ENCODE measurements at regions of chr14 and their contacts with region 1.

Region 1: DNA sequence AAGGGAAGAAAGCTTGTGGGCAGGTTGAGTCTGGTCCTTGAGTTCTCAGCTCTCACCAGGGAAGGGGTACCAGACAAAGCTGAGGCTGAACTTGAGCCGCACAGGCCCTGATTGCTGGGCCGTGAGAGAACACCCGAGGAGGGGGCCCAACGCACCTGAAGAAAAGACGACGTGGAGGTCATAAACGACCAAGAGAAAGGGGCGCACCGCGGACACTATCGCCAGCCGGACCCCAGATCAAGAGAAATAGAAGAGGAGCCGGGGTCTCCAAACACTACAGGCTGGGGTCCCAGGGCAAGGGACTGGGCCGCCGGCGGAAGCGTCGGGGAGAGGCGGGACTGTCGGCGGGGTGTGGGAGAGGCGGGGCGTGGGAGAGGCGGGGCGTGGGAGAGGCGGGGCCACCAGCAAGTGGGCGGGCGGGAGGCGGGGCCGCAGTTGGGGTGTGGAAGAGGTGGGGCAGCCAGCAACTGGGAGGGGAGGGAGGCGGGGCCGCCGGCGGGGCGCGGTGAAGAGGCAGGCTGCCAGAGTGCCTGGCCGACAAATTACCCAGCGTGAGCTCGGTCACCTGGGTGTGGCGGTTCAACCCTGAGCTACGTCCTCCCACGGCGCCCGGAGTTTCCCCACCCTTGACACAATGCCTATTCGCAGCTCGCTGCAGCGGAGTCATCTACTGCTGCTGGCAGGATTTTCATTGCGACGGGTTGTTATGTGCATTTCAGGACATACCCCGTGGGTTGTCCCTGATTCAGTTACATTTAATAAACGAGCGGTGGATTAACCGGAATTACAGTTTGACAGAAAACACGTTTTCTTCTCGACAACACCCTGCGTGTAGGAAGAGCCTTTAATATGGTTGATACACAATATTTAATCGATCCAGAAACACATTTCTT is 15.5 kb upstream of the NEMF start:
- DNase-seq: peak; percentile 88 to 94
- H3K4me3 ChIP-seq: peak overlapping the region; percentile 85
- H3K27ac ChIP-seq: peak overlapping the region; percentile 78
- H3K4me1 ChIP-seq: peaks cover 32% of the 10 kb centered on the region
- H3K27me3 ChIP-seq: no peaks in the 10 kb centered on the region
- CTCF ChIP-seq: no peak

Region 2: GRCh38 chr14:49483268-49483667 is 384.8 kb before region 1 on chr14:
- CTCF ChIA-PET with region 1: no interaction called
- POLR2A ChIA-PET with region 1: no interaction called
- intact Hi-C with region 1: no loop called
- DNase-seq: no peak
- H3K4me3 ChIP-seq: no peak overlapping the region
- H3K27ac ChIP-seq: no peak overlapping the region
- H3K4me1 ChIP-seq: no peaks in the 10 kb centered on the region
- H3K27me3 ChIP-seq: no peaks in the 10 kb centered on the region
- CTCF ChIP-seq: no peak

Region 3: GRCh38 chr14:49828640-49829039 is 39.4 kb before region 1 on chr14:
- CTCF ChIA-PET with region 1: no interaction called
- POLR2A ChIA-PET with region 1: no interaction called
- intact Hi-C with region 1: no loop called
- DNase-seq: no peak
- H3K4me3 ChIP-seq: no peak overlapping the region
- H3K27ac ChIP-seq: no peak overlapping the region
- H3K4me1 ChIP-seq: no peaks in the 10 kb centered on the region
- H3K27me3 ChIP-seq: no peaks in the 10 kb centered on the region
- CTCF ChIP-seq: no peak

Region 4: GRCh38 chr14:49892636-49893308 is 24.7 kb after region 1 on chr14 and contains the start of gene ARF6:
- CTCF ChIA-PET with region 1: interaction called, 15 read pairs
- POLR2A ChIA-PET with region 1: interaction called, 11 read pairs
- intact Hi-C with region 1: loop called (anchors 1 kb)
- DNase-seq: peak; percentile 87 to 97
- H3K4me3 ChIP-seq: peak within 1 kb of the TSS; percentile 99
- H3K27ac ChIP-seq: peak within 1 kb of the TSS; percentile 96
- H3K4me1 ChIP-seq: peaks cover 28% of the 10 kb centered on the region
- H3K27me3 ChIP-seq: no peaks in the 10 kb centered on the region
- CTCF ChIP-seq: no peak; the same call in 1 of the 2 replicates
- total RNA-seq, gene ARF6: 46.8 and 65.3 TPM in 2 replicates

Region 5: DNA sequence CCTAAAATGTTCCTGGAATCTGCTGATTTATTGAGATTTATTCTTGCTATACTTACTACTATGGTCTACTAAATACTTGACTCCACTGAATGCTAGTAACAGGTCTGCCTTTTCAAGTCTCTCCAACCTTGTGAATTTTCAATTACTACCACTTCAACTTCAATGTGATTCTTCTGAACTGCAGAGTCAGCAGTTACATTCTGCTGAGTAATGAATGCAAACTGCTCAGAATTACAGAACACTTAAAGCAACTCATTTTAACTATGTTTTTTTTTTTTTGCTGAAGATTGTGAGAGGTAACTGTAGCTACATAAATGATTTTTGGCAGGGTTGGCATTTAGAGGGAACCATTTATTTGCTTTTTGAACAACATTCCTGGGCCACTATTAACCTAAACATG is 66.6 kb after region 1 on chr14:
- CTCF ChIA-PET with region 1: no interaction called
- POLR2A ChIA-PET with region 1: interaction called, 13 read pairs
- intact Hi-C with region 1: no loop called
- DNase-seq: no peak
- H3K4me3 ChIP-seq: no peak overlapping the region
- H3K27ac ChIP-seq: no peak overlapping the region
- H3K4me1 ChIP-seq: no peaks in the 10 kb centered on the region
- H3K27me3 ChIP-seq: no peaks in the 10 kb centered on the region
- CTCF ChIP-seq: no peak

Region 6: GRCh38 chr14:50018201-50018932 is 150.3 kb after region 1 on chr14:
- CTCF ChIA-PET with region 1: interaction called, 10 read pairs
- POLR2A ChIA-PET with region 1: no interaction called
- intact Hi-C with region 1: no loop called
- DNase-seq: peak; percentile 43 to 88
- H3K4me3 ChIP-seq: no peak overlapping the region
- H3K27ac ChIP-seq: peak overlapping the region; percentile 72
- H3K4me1 ChIP-seq: peaks cover 52% of the 10 kb centered on the region
- H3K27me3 ChIP-seq: no peaks in the 10 kb centered on the region
- CTCF ChIP-seq: no peak

Region 7: GRCh38 chr14:50028458-50028857 is 160.4 kb after region 1 on chr14:
- CTCF ChIA-PET with region 1: no interaction called
- POLR2A ChIA-PET with region 1: no interaction called
- intact Hi-C with region 1: no loop called
- DNase-seq: no peak
- H3K4me3 ChIP-seq: no peak overlapping the region
- H3K27ac ChIP-seq: no peak overlapping the region
- H3K4me1 ChIP-seq: peaks cover 11% of the 10 kb centered on the region
- H3K27me3 ChIP-seq: no peaks in the 10 kb centered on the region
- CTCF ChIP-seq: no peak

Region 8: DNA sequence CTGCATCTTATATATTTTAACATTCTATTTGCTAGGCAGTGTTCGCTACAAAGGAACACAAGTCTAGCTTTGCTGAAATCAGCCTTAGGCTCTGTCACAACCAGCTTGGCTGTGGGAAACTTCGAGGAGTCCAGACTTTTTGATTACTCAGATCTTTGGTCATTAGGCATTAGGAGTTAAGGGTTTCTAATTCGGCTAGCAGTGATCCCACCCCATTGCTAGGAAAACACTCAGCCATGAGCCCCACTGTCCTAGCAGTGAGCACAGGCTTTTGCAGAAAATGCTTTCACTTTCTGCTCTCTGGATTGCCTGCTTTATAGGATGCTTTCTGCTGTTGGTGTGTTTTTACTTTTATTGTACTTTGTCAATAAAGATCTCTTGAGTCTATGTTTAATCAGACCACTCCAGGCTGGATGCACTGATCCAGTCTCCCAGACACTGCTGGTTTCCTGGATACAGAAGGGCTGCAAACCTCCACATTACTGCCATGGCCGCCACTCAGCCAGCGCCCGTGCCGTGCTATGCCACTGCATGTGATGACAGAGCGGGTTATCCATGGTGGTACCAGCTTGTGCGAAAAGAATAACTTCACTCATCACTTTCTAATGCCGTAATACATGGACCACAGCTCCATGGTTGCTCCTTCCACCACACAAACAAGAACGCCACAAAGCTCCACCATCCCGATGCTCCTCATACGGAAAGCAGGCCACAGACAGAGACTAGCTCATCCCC is 1117.2 kb after region 1 on chr14:
- CTCF ChIA-PET with region 1: no interaction called
- POLR2A ChIA-PET with region 1: no interaction called
- intact Hi-C with region 1: no loop called
- DNase-seq: no peak
- H3K4me3 ChIP-seq: no peak overlapping the region
- H3K27ac ChIP-seq: no peak overlapping the region
- H3K4me1 ChIP-seq: no peaks in the 10 kb centered on the region
- H3K27me3 ChIP-seq: no peaks in the 10 kb centered on the region
- CTCF ChIP-seq: no peak